Activated CD4-positive, alpha-beta T cell treated with anti-CD3 and anti-CD28 coated beads for 36 hours (primary cell): ENCODE measurements at regions of chr12 and their contacts with region 1.

Region 1: DNA sequence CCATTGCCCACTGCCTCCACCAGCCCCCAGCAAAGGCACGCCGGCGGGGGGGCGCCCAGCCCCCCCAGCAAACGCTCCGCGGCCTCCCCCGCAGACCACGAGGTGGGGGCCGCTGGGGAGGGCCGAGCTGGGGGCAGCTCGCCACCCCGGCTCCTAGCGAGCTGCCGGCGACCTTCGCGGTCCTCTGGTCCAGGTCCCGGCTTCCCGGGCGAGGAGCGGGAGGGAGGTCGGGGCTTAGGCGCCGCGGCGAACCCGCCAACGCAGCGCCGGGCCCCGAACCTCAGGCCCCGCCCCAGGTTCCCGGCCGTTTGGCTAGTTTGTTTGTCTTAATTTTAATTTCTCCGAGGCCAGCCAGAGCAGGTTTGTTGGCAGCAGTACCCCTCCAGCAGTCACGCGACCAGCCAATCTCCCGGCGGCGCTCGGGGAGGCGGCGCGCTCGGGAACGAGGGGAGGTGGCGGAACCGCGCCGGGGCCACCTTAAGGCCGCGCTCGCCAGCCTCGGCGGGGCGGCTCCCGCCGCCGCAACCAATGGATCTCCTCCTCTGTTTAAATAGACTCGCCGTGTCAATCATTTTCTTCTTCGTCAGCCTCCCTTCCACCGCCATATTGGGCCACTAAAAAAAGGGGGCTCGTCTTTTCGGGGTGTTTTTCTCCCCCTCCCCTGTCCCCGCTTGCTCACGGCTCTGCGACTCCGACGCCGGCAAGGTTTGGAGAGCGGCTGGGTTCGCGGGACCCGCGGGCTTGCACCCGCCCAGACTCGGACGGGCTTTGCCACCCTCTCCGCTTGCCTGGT is at the start of gene CDKN1B:
- DNase-seq: peak; percentile 93
- ATAC-seq: peak; percentile 69
- H3K4me3 Mint-ChIP-seq: peak within 1 kb of the TSS; percentile 93
- H3K27ac Mint-ChIP-seq: peak within 1 kb of the TSS; percentile 98
- H3K4me1 Mint-ChIP-seq: peaks cover 53% of the 10 kb centered on the region
- H3K27me3 Mint-ChIP-seq: no peaks in the 10 kb centered on the region
- total RNA-seq, gene CDKN1B: 34.2 to 37.0 TPM

Region 2: DNA sequence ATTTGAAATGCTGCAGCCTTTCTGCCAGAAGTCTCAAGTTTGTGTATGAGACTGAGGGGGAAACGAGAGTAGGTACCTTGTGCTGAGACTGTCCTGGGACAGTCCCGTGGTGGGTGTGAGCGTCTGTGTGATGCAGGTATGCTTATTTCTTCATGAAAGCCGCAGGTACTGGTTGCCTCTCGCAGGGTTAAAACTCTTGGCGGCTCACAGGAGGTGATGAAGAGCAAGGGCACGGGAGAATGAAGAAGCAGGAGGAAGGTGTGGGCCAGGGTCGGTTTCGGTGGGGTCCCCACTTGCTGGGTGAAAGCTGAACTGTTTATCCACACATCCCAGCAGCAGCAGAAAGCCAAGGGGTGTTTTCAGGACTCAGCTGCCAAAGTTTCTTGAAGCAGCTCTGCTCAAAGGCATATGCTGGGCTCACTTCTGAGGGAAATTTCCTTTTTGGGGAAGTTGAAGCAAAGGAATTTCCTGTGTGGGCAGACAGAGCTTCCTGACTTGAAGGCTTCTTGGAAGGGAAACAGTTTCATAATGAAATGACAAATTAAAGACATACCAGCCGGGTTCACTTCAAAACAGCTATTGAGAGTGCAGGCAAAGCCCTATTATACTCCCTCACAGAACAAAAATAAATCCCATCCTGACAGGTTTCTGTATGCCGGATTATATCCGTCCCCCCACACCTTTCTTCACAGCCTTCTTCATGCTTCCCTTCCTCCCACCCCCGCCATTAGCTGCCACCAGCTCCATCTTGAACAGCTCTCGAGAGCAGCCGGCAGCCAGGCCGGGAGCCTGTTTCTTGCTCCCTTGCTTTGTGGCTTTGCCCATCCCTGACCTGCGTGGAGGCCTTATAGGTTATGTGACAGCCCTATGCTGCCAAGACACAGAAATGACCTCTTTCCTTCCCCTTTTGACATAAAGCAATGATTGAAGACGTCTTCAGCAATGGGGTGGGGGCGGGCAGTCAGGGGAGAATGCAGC is 950.9 kb before region 1 on chr12:
- CTCF ChIA-PET with region 1: no interaction called
- POLR2A ChIA-PET with region 1: no interaction called
- intact Hi-C with region 1: loop called in 1 of 2 experiments (anchors 10 kb)
- DNase-seq: peak; percentile 90
- ATAC-seq: peak; percentile 89
- H3K4me3 Mint-ChIP-seq: peak overlapping the region; percentile 32
- H3K27ac Mint-ChIP-seq: peak overlapping the region; percentile 84
- H3K4me1 Mint-ChIP-seq: peaks cover 100% of the 10 kb centered on the region
- H3K27me3 Mint-ChIP-seq: no peaks in the 10 kb centered on the region

Region 3: GRCh38 chr12:12486661-12487240 is 230.2 kb before region 1 on chr12:
- CTCF ChIA-PET with region 1: no interaction called
- POLR2A ChIA-PET with region 1: interaction called, 5 read pairs
- intact Hi-C with region 1: loop called in 1 of 2 experiments (anchors 5 kb)
- DNase-seq: no peak
- ATAC-seq: peak; percentile 32
- H3K4me3 Mint-ChIP-seq: no peak overlapping the region
- H3K27ac Mint-ChIP-seq: peak overlapping the region; percentile 80
- H3K4me1 Mint-ChIP-seq: peaks cover 57% of the 10 kb centered on the region
- H3K27me3 Mint-ChIP-seq: no peaks in the 10 kb centered on the region

Region 4: GRCh38 chr12:12661086-12661485 is 55.9 kb before region 1 on chr12:
- CTCF ChIA-PET with region 1: interaction called, 10 read pairs
- POLR2A ChIA-PET with region 1: no interaction called
- intact Hi-C with region 1: no loop called
- DNase-seq: no peak
- ATAC-seq: no peak
- H3K4me3 Mint-ChIP-seq: no peak overlapping the region
- H3K27ac Mint-ChIP-seq: no peak overlapping the region
- H3K4me1 Mint-ChIP-seq: peaks cover under 1% of the 10 kb centered on the region
- H3K27me3 Mint-ChIP-seq: no peaks in the 10 kb centered on the region